Panc1 (cell line): ENCODE measurements at regions of chr3 and their contacts with region 1.

Region 1: DNA sequence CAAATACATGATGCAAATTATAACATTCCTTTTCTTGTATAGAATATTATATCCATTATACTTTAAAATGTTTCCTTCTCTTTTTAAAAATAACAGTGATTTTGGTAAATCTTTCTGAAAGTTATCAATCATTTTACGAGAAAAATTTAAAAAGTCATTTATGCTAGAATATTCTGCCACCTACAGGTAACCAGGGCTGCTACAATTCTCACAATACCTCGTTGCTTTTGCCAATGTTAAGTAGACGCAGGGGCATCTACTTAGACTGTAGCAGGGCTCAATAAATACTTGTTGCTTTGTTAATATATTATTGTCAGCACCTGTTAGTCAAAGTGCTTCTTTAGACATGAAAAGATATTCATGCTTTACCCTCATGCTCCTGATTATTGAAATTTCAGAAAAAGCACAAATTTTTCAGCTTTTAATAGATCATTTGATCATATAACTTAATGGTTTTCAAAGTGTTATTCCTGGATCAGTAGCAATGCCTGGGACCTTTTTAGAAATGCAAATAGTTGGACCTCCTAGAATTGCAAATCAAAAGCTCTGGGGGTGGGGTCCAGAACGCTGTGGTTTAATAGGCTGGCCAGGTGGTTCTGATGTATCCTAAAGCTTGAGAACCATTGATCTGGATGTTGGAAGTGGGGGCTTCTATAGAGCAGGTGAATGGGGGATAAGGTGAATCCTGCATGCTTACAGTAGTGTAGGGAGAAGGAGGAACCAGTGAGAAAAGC is 223.6 kb upstream of the PDZRN3 start:
- DNase-seq: no peak
- ATAC-seq: no peak
- H3K4me3 ChIP-seq: no peak overlapping the region
- H3K27ac ChIP-seq: no peak overlapping the region
- H3K4me1 ChIP-seq: no peaks in the 10 kb centered on the region
- H3K27me3 ChIP-seq: no peaks in the 10 kb centered on the region
- CTCF ChIP-seq: peak; percentile 48; the same call in 1 of the 2 replicates

Region 2: GRCh38 chr3:73508330-73508954 is 339.9 kb before region 1 on chr3:
- CTCF ChIA-PET with region 1: interaction called, 3 read pairs
- POLR2A ChIA-PET with region 1: no interaction called
- in situ Hi-C with region 1: no loop called
- intact Hi-C with region 1: loop called (anchors 5 kb)
- DNase-seq: peak; percentile 18
- ATAC-seq: peak; percentile 86
- H3K4me3 ChIP-seq: no peak overlapping the region
- H3K27ac ChIP-seq: no peak overlapping the region
- H3K4me1 ChIP-seq: no peaks in the 10 kb centered on the region
- H3K27me3 ChIP-seq: no peaks in the 10 kb centered on the region
- CTCF ChIP-seq: peak; percentile 79

Region 3: DNA sequence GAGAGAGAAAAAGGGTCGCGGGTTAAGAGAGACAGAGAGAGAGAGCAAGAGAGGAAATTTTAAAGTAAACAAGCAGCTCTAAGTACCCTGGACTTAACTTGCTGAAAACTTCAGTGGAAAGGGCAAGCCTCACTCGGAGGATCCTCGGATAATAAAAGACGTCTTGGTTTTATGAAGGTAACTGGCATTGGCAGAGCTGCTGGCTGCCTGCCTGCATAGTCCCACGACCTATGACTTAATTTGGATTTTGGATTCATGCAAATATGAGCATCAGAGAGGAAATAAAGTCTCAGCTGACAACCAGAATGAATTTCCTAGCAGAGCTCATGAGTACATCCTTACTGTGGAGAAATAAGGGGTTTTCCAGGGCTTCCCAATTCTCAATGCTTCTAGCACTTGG is 128.5 kb before region 1 on chr3:
- CTCF ChIA-PET with region 1: no interaction called
- POLR2A ChIA-PET with region 1: no interaction called
- in situ Hi-C with region 1: no loop called
- intact Hi-C with region 1: no loop called
- DNase-seq: no peak
- ATAC-seq: no peak
- H3K4me3 ChIP-seq: no peak overlapping the region
- H3K27ac ChIP-seq: no peak overlapping the region
- H3K4me1 ChIP-seq: no peaks in the 10 kb centered on the region
- H3K27me3 ChIP-seq: no peaks in the 10 kb centered on the region
- CTCF ChIP-seq: no peak